ENCODE measurements at regions of chr11 and their contacts with region 1.

Region 1: DNA sequence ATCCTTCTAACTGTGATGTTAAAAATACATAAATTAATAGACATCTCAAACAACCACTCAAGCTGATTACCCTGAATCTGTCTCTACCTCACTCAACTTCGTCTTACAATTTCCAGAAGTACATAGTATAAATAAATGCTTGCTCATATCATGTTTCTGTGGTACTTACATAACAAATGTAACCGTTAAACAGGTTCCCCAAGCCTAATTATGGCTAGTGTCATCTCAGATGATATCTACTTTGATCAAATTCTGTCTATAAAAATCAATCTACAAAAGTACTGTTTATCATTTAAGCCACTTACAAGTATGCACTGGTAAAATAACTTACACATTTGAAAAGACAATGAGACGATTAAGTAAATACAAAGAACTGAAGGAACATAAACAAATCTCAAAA is 28.2 kb upstream of the CHRNA10 start:
- DNase-seq: no peak
- ATAC-seq: no peak
- H3K4me3 ChIP-seq: no peak overlapping the region
- H3K27ac ChIP-seq: no peak overlapping the region
- H3K4me1 ChIP-seq: no peaks in the 10 kb centered on the region
- H3K27me3 ChIP-seq: no peaks in the 10 kb centered on the region
- CTCF ChIP-seq: no peak
- POLR2A ChIP-seq: no peak
- RAD21 ChIP-seq: no peak

Region 2: GRCh38 chr11:3195251-3196160 is 503.9 kb before region 1 on chr11:
- CTCF ChIA-PET with region 1: no interaction called
- POLR2A ChIA-PET with region 1: no interaction called
- RAD21 ChIA-PET with region 1: no interaction called
- intact Hi-C with region 1: no loop called
- DNase-seq: peak; percentile 6
- ATAC-seq: peak; percentile 88
- H3K4me3 ChIP-seq: no peak overlapping the region
- H3K27ac ChIP-seq: no peak overlapping the region
- H3K4me1 ChIP-seq: no peaks in the 10 kb centered on the region
- H3K27me3 ChIP-seq: peaks cover 1% of the 10 kb centered on the region; the same call in 1 of the 2 replicates
- CTCF ChIP-seq: peak; percentile 56 to 75 (median 70); a peak in 5 of 6 replicates
- POLR2A ChIP-seq: no peak
- RAD21 ChIP-seq: peak; percentile 62

Region 3: GRCh38 chr11:3753110-3753509 is 53.7 kb after region 1 on chr11:
- CTCF ChIA-PET with region 1: no interaction called
- POLR2A ChIA-PET with region 1: no interaction called
- RAD21 ChIA-PET with region 1: no interaction called
- intact Hi-C with region 1: loop called (anchors 10 kb)
- DNase-seq: no peak
- ATAC-seq: no peak
- H3K4me3 ChIP-seq: no peak overlapping the region
- H3K27ac ChIP-seq: no peak overlapping the region
- H3K4me1 ChIP-seq: no peaks in the 10 kb centered on the region
- H3K27me3 ChIP-seq: no peaks in the 10 kb centered on the region
- CTCF ChIP-seq: no peak
- POLR2A ChIP-seq: no peak
- RAD21 ChIP-seq: no peak

Region 4: DNA sequence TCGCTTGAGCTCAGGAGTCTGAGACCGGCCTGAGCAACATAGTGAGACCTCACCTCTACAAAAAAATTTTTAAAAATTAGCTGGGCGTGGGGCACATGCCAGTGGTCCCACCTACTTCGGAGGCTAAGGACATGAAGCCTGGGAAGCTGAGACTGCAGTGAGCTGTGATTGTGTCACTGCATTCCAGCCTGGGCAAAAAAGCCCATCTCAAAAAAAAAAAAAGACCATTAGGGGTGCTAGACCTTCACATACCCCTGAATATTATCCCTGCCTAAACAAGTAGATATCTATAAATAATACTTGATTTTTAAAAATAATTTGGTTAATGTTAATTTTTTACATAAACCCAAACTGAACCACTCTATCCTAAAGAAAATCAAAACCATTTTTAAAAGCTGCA is 73.8 kb after region 1 on chr11:
- CTCF ChIA-PET with region 1: no interaction called
- POLR2A ChIA-PET with region 1: no interaction called
- RAD21 ChIA-PET with region 1: no interaction called
- intact Hi-C with region 1: loop called (anchors 5 kb)
- DNase-seq: no peak
- ATAC-seq: no peak
- H3K4me3 ChIP-seq: no peak overlapping the region
- H3K27ac ChIP-seq: no peak overlapping the region
- H3K4me1 ChIP-seq: no peaks in the 10 kb centered on the region
- H3K27me3 ChIP-seq: no peaks in the 10 kb centered on the region
- CTCF ChIP-seq: no peak
- POLR2A ChIP-seq: no peak
- RAD21 ChIP-seq: no peak

Region 5: GRCh38 chr11:3797329-3798095 is 98.1 kb after region 1 on chr11 and contains the start of gene NUP98:
- CTCF ChIA-PET with region 1: no interaction called
- POLR2A ChIA-PET with region 1: no interaction called
- RAD21 ChIA-PET with region 1: no interaction called
- intact Hi-C with region 1: no loop called
- DNase-seq: peak; percentile 99
- ATAC-seq: peak; percentile 96
- H3K4me3 ChIP-seq: peak within 1 kb of the TSS; percentile 86 to 100
- H3K27ac ChIP-seq: peak within 1 kb of the TSS; percentile 85
- H3K4me1 ChIP-seq: peaks cover 14 to 28% of the 10 kb centered on the region in 2 experiments
- H3K27me3 ChIP-seq: no peaks in the 10 kb centered on the region
- CTCF ChIP-seq: no peak
- POLR2A ChIP-seq: peak; percentile 80
- RAD21 ChIP-seq: no peak
- total RNA-seq, gene NUP98: 98.4 TPM

Region 6: GRCh38 chr11:4006946-4007680 is 307.7 kb after region 1 on chr11:
- CTCF ChIA-PET with region 1: no interaction called
- POLR2A ChIA-PET with region 1: no interaction called
- RAD21 ChIA-PET with region 1: no interaction called
- intact Hi-C with region 1: no loop called
- DNase-seq: no peak
- ATAC-seq: no peak
- H3K4me3 ChIP-seq: no peak overlapping the region
- H3K27ac ChIP-seq: no peak overlapping the region
- H3K4me1 ChIP-seq: no peaks in the 10 kb centered on the region
- H3K27me3 ChIP-seq: no peaks in the 10 kb centered on the region
- CTCF ChIP-seq: no peak
- POLR2A ChIP-seq: no peak
- RAD21 ChIP-seq: no peak

Region 7: GRCh38 chr11:5460983-5461621 is 1761.7 kb after region 1 on chr11:
- CTCF ChIA-PET with region 1: no interaction called
- POLR2A ChIA-PET with region 1: no interaction called
- RAD21 ChIA-PET with region 1: no interaction called
- intact Hi-C with region 1: no loop called
- DNase-seq: no peak
- ATAC-seq: peak; percentile 30
- H3K4me3 ChIP-seq: no peak overlapping the region
- H3K27ac ChIP-seq: peak overlapping the region; percentile 21
- H3K4me1 ChIP-seq: peaks cover 0 to 64% of the 10 kb centered on the region in 2 experiments; a peak in 2 of 4 replicates
- H3K27me3 ChIP-seq: no peaks in the 10 kb centered on the region
- CTCF ChIP-seq: no peak
- POLR2A ChIP-seq: no peak
- RAD21 ChIP-seq: no peak